Naive thymus-derived CD4-positive, alpha-beta T cell (primary cell): ENCODE measurements at regions of chr3 and their contacts with region 1.

Region 1: DNA sequence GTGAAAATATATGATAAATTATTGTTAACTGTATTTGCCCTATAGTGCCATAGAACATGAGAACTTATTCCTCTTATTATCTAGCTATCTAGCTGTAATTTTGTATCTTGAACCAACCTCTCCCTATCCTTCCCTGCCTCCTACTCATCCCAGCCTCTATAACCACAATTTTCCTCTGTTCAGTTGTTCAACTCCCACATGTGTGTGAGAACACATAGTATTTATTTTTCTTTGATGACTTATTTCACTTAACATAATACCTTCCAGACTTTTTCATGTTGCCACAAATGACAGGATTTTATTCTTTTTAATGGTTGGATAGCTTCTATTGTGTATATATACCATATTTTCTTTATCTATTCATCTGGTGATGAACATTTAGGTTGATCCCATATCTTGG is 85.4 kb upstream of the SUCLG2 start:
- DNase-seq: no peak
- ATAC-seq: no peak
- H3K4me3 ChIP-seq: no peak overlapping the region
- H3K4me3 Mint-ChIP-seq: peak overlapping the region in 7 of 10 donors; percentile 4 to 72 (median 32)
- H3K27ac ChIP-seq: peak overlapping the region; percentile 62
- H3K27ac Mint-ChIP-seq: peak overlapping the region in 8 of 9 donors; percentile 79 to 98 (median 95)
- H3K4me1 ChIP-seq: peaks cover 6 to 63% of the 10 kb centered on the region in 2 donors
- H3K4me1 Mint-ChIP-seq: peaks cover 15 to 95% (median 90%) of the 10 kb centered on the region in 7 donors
- H3K27me3 ChIP-seq: no peaks in the 10 kb centered on the region
- H3K27me3 Mint-ChIP-seq: no peaks in the 10 kb centered on the region

Region 2: GRCh38 chr3:67601911-67602608 is 137.8 kb before region 1 on chr3:
- CTCF ChIA-PET with region 1: no interaction called
- POLR2A ChIA-PET with region 1: no interaction called
- intact Hi-C with region 1: loop called in 1 of 2 experiments (anchors 5 kb)
- DNase-seq: peak in 6 of 9 donors; percentile 8 to 31 (median 16)
- ATAC-seq: peak; percentile 72
- H3K4me3 ChIP-seq: peak overlapping the region; percentile 5
- H3K4me3 Mint-ChIP-seq: peak overlapping the region; percentile 65 to 90 (median 77)
- H3K27ac ChIP-seq: peak overlapping the region; percentile 66
- H3K27ac Mint-ChIP-seq: peak overlapping the region; percentile 56 to 95 (median 81)
- H3K4me1 ChIP-seq: peaks cover 30 to 69% of the 10 kb centered on the region in 2 donors
- H3K4me1 Mint-ChIP-seq: peaks cover 48 to 93% (median 86%) of the 10 kb centered on the region in 7 donors
- H3K27me3 ChIP-seq: no peaks in the 10 kb centered on the region
- H3K27me3 Mint-ChIP-seq: no peaks in the 10 kb centered on the region

Region 3: GRCh38 chr3:67647390-67647878 is 92.4 kb before region 1 on chr3:
- CTCF ChIA-PET with region 1: no interaction called
- POLR2A ChIA-PET with region 1: interaction called, 12 read pairs
- intact Hi-C with region 1: no loop called
- DNase-seq: no peak
- ATAC-seq: no peak
- H3K4me3 ChIP-seq: no peak overlapping the region
- H3K4me3 Mint-ChIP-seq: peak overlapping the region in 3 of 10 donors; percentile 6 to 63 (median 13)
- H3K27ac ChIP-seq: no peak overlapping the region
- H3K27ac Mint-ChIP-seq: peak overlapping the region in 1 of 9 donors; percentile 8
- H3K4me1 ChIP-seq: peaks cover 11 to 24% of the 10 kb centered on the region in 2 donors
- H3K4me1 Mint-ChIP-seq: peaks cover 48 to 98% (median 89%) of the 10 kb centered on the region in 7 donors
- H3K27me3 ChIP-seq: no peaks in the 10 kb centered on the region
- H3K27me3 Mint-ChIP-seq: no peaks in the 10 kb centered on the region

Region 4: GRCh38 chr3:67685499-67685898 is 54.4 kb before region 1 on chr3:
- CTCF ChIA-PET with region 1: no interaction called
- POLR2A ChIA-PET with region 1: interaction called, 4 read pairs
- intact Hi-C with region 1: loop called in 1 of 2 experiments (anchors 2 kb)
- DNase-seq: peak in 5 of 9 donors; percentile 15 to 34 (median 29)
- ATAC-seq: peak; percentile 67
- H3K4me3 ChIP-seq: peak overlapping the region; percentile 15
- H3K4me3 Mint-ChIP-seq: peak overlapping the region; percentile 60 to 82 (median 72)
- H3K27ac ChIP-seq: peak overlapping the region; percentile 54
- H3K27ac Mint-ChIP-seq: peak overlapping the region; percentile 76 to 96 (median 87)
- H3K4me1 ChIP-seq: peaks cover 8 to 21% of the 10 kb centered on the region in 2 donors
- H3K4me1 Mint-ChIP-seq: peaks cover 21 to 53% (median 32%) of the 10 kb centered on the region in 7 donors
- H3K27me3 ChIP-seq: no peaks in the 10 kb centered on the region
- H3K27me3 Mint-ChIP-seq: no peaks in the 10 kb centered on the region

Region 5: GRCh38 chr3:67713764-67714469 is 25.9 kb before region 1 on chr3:
- CTCF ChIA-PET with region 1: no interaction called
- POLR2A ChIA-PET with region 1: interaction called, 3 read pairs
- intact Hi-C with region 1: loop called in 1 of 2 experiments (anchors 2 kb)
- DNase-seq: no peak
- ATAC-seq: no peak
- H3K4me3 ChIP-seq: no peak overlapping the region
- H3K4me3 Mint-ChIP-seq: no peak overlapping the region
- H3K27ac ChIP-seq: no peak overlapping the region
- H3K27ac Mint-ChIP-seq: peak overlapping the region in 6 of 9 donors; percentile 3 to 85 (median 22)
- H3K4me1 ChIP-seq: no peaks in the 10 kb centered on the region
- H3K4me1 Mint-ChIP-seq: peaks cover 0 to 31% (median 16%) of the 10 kb centered on the region in 7 donors
- H3K27me3 ChIP-seq: no peaks in the 10 kb centered on the region
- H3K27me3 Mint-ChIP-seq: no peaks in the 10 kb centered on the region

Region 6: GRCh38 chr3:67947808-67948508 is 208.1 kb after region 1 on chr3:
- CTCF ChIA-PET with region 1: no interaction called
- POLR2A ChIA-PET with region 1: no interaction called
- intact Hi-C with region 1: loop called in 1 of 2 experiments (anchors 5 kb)
- DNase-seq: peak in 8 of 9 donors; percentile 25 to 92 (median 84)
- ATAC-seq: peak; percentile 97
- H3K4me3 ChIP-seq: peak overlapping the region; percentile 40
- H3K4me3 Mint-ChIP-seq: peak overlapping the region; percentile 76 to 92 (median 83)
- H3K27ac ChIP-seq: peak overlapping the region; percentile 38
- H3K27ac Mint-ChIP-seq: peak overlapping the region; percentile 76 to 97 (median 91)
- H3K4me1 ChIP-seq: peaks cover 6 to 26% of the 10 kb centered on the region in 2 donors
- H3K4me1 Mint-ChIP-seq: peaks cover 11 to 54% (median 39%) of the 10 kb centered on the region in 7 donors
- H3K27me3 ChIP-seq: no peaks in the 10 kb centered on the region
- H3K27me3 Mint-ChIP-seq: no peaks in the 10 kb centered on the region